ENCODE measurements at regions of chr16 and their contacts with region 1.

Region 1: GRCh38 chr16:96935-97381 is 18.9 kb downstream of the MPG start:
- DNase-seq: peak; percentile 87 to 95 (median 93)
- H3K4me3 ChIP-seq: no peak overlapping the region
- H3K27ac ChIP-seq: no peak overlapping the region
- H3K4me1 ChIP-seq: peaks cover 0 to 5% of the 10 kb centered on the region in 2 donors
- H3K27me3 ChIP-seq: no peaks in the 10 kb centered on the region
- CTCF ChIP-seq: peak; percentile 97 to 100 (median 99)
- POLR2A ChIP-seq: no peak

Region 2: DNA sequence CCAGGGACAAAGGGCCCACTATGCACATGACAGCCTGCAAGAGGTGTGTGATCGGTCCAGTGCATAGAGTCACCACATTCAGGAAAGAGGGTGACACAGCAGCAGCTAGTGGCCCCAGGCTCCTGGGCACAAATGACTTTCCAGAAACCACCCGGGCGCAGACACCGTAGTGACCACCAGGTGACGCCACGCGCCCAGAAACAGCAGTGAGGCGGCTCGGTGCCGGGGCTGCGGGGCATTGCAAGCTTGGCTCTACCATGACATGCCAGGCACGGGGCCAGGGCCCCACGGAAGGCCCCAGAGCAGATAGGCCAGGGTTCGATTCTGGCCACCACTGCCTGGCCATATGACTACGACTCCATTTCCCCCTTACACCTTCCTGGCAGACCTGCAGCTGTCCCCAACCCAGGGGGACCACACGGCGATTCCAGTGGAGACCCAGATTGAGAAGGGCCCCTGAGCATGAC is 31.3 kb before region 1 on chr16:
- intact Hi-C with region 1: loop called in 1 of 2 experiments (anchors 2 kb)
- DNase-seq: peak; percentile 80 to 93 (median 90)
- H3K4me3 ChIP-seq: no peak overlapping the region
- H3K27ac ChIP-seq: no peak overlapping the region
- H3K4me1 ChIP-seq: no peaks in the 10 kb centered on the region
- H3K27me3 ChIP-seq: no peaks in the 10 kb centered on the region
- CTCF ChIP-seq: peak; percentile 79 to 99 (median 98)
- POLR2A ChIP-seq: no peak